Activated CD8-positive, alpha-beta T cell treated with anti-CD3 and anti-CD28 coated beads, Interleukin-2, amount 10 ng/mL, durations not matched to agents 7 days and 5 days (primary cell): ENCODE measurements at regions of chr19 and their contacts with region 1.

Region 1: DNA sequence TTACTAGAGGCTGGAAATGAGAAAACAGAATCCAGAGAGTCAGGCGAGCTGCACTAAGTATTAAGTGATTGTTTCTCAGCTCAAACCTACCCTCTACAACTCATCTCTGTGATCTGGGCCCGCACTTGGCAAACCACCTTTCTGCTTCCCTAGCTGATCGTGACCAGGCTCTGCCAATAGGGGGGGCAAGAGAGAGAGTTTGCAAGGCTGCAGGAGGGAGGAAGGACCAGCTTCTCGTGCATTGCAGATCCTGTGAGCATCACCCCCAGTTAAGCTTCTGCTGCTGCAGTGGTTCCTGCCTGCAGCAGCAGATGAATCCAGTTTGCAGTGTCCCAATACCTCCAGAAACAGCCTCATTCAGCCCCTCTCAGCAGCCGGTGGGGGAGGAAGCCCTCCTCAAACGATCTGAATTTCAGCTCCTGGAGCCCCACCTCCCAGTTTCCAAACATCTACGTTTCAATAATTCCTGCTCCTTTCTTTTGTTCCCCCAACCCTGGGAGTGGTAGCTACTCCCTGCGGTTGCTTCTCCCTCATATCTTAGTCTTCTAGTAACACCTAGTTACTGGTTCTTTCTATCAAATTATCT is 20.0 kb downstream of the XRCC1 start:
- DNase-seq: peak; percentile 91
- ATAC-seq: peak; percentile 95
- H3K4me3 Mint-ChIP-seq: no peak overlapping the region
- H3K27ac Mint-ChIP-seq: peak overlapping the region; percentile 6
- H3K4me1 Mint-ChIP-seq: peaks cover 8% of the 10 kb centered on the region
- H3K27me3 Mint-ChIP-seq: no peaks in the 10 kb centered on the region

Region 2: DNA sequence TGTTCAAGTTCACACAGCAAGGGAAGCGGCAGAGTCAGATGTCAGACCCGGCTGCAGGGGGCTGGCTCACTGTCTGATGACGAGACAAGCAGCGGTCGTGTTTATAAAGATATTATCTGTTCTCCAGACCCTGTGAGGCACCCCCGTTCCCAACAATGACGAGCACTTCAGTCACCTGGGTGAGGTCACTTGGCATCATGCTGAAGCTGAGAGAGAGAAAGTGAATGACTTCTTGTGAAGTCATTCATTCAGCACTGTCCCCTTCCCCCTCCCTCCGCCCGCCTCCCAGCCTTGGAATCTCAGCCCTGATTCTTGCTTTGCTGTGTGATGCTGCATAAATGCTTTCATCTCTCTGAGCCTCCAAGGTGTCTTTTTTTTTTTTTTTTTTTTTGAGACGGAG is 85.0 kb before region 1 on chr19:
- CTCF ChIA-PET with region 1: no interaction called
- POLR2A ChIA-PET with region 1: no interaction called
- DNase-seq: no peak
- ATAC-seq: peak; percentile 17
- H3K4me3 Mint-ChIP-seq: no peak overlapping the region
- H3K27ac Mint-ChIP-seq: no peak overlapping the region
- H3K4me1 Mint-ChIP-seq: peaks cover 46% of the 10 kb centered on the region
- H3K27me3 Mint-ChIP-seq: no peaks in the 10 kb centered on the region

Region 3: GRCh38 chr19:43526884-43527859 is 28.1 kb before region 1 on chr19 and contains the start of gene ETHE1:
- CTCF ChIA-PET with region 1: interaction called, 23 read pairs
- POLR2A ChIA-PET with region 1: no interaction called
- DNase-seq: peak; percentile 83
- ATAC-seq: peak; percentile 92
- H3K4me3 Mint-ChIP-seq: peak within 1 kb of the TSS; percentile 95
- H3K27ac Mint-ChIP-seq: peak within 1 kb of the TSS; percentile 68
- H3K4me1 Mint-ChIP-seq: peaks cover 29% of the 10 kb centered on the region
- H3K27me3 Mint-ChIP-seq: no peaks in the 10 kb centered on the region
- total RNA-seq, gene ETHE1: 67.9 to 69.1 TPM

Region 4: GRCh38 chr19:43541920-43542650 is 13.2 kb before region 1 on chr19:
- CTCF ChIA-PET with region 1: interaction called, 43 read pairs
- POLR2A ChIA-PET with region 1: no interaction called
- DNase-seq: no peak
- ATAC-seq: no peak
- H3K4me3 Mint-ChIP-seq: no peak overlapping the region
- H3K27ac Mint-ChIP-seq: no peak overlapping the region
- H3K4me1 Mint-ChIP-seq: no peaks in the 10 kb centered on the region
- H3K27me3 Mint-ChIP-seq: no peaks in the 10 kb centered on the region

Region 5: GRCh38 chr19:43575156-43575950 is 20.1 kb after region 1 on chr19 and contains the starts of genes PINLYP and XRCC1:
- CTCF ChIA-PET with region 1: interaction called, 25 read pairs
- POLR2A ChIA-PET with region 1: interaction called, 3 read pairs
- DNase-seq: peak; percentile 99
- ATAC-seq: peak; percentile 96
- H3K4me3 Mint-ChIP-seq: peak within 1 kb of the TSS; percentile 96
- H3K27ac Mint-ChIP-seq: peak within 1 kb of the TSS; percentile 93
- H3K4me1 Mint-ChIP-seq: peaks cover 45% of the 10 kb centered on the region
- H3K27me3 Mint-ChIP-seq: no peaks in the 10 kb centered on the region
- total RNA-seq, gene PINLYP: 7.4 to 8.9 TPM
- total RNA-seq, gene XRCC1: 46.5 to 48.4 TPM

Region 6: GRCh38 chr19:43589678-43590077 is 34.4 kb after region 1 on chr19:
- CTCF ChIA-PET with region 1: interaction called, 239 read pairs
- POLR2A ChIA-PET with region 1: interaction called, 20 read pairs
- DNase-seq: no peak
- ATAC-seq: no peak
- H3K4me3 Mint-ChIP-seq: no peak overlapping the region
- H3K27ac Mint-ChIP-seq: peak overlapping the region; percentile 31
- H3K4me1 Mint-ChIP-seq: peaks cover 24% of the 10 kb centered on the region
- H3K27me3 Mint-ChIP-seq: no peaks in the 10 kb centered on the region